Common myeloid progenitor, CD34-positive (primary cell): ENCODE measurements at regions of chr14 and their contacts with region 1.

Region 1: DNA sequence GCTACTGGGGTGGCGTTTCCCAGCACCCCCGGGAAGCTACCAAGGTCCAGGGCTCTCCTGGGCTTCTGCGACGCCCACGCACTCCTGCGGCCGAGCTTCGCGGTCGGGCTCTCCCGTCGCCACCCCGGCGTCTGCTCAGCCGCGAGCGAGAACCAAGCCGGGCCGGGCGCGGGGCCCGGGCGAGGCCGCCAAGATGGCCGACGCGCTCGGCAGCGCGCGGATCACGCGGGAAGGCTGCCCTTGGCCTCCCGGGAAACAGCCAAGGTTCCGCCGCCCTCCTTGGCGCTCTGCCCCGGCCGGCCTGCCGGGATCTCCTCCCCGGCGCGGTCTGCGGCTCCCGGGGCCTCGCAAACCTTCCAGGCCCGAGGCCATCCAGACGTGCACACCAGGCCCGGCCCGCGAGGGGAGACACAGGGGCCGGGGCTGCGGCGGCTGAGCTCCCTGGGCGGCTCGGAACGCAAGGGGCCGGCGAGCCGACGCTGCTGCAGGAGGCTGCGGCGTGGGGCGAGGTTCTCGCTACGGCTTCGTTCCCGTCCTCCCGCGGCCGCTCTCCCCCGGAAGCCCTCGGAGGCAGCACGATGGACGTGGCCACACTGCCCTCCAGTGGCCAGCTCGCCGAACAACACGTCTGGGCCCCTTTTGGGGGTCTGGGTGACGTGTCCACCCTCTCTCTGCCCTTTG is 23.5 kb upstream of the ZFP36L1 start:
- DNase-seq: peak; percentile 88 to 94 (median 93)
- H3K4me3 ChIP-seq: peak overlapping the region; percentile 32 to 71 (median 49)
- H3K27ac ChIP-seq: peak overlapping the region; percentile 59 to 82
- H3K4me1 ChIP-seq: peaks cover 9 to 66% (median 59%) of the 10 kb centered on the region in 4 experiments
- H3K27me3 ChIP-seq: no peaks in the 10 kb centered on the region

Region 2: DNA sequence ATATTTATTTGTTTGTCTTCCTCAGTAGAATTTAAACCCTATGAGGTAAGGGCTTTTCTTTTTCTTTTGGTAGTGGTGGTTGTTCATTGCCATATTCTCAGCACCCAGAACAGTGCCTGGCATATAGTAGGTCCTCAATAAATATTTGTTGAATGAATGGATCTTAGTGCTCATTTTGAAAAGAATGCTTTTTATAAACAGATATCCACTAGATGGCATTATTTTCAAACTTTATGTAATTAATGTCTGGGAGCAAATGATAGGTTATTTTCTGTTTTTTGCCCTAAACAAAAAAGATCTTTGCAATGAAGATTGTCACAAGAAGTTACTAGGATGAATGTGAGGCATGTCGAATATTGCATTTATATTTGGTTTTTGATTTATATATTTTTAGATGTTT is 932.7 kb before region 1 on chr14:
- CTCF ChIA-PET with region 1: interaction called, 22 read pairs
- POLR2A ChIA-PET with region 1: no interaction called
- DNase-seq: peak; percentile 29 to 47 (median 42)
- H3K4me3 ChIP-seq: no peak overlapping the region
- H3K27ac ChIP-seq: no peak overlapping the region
- H3K4me1 ChIP-seq: peaks cover 11 to 33% (median 19%) of the 10 kb centered on the region in 4 experiments
- H3K27me3 ChIP-seq: no peaks in the 10 kb centered on the region

Region 3: GRCh38 chr14:67934008-67934481 is 882.4 kb before region 1 on chr14:
- CTCF ChIA-PET with region 1: interaction called, 28 read pairs
- POLR2A ChIA-PET with region 1: no interaction called
- DNase-seq: peak; percentile 81 to 87 (median 86)
- H3K4me3 ChIP-seq: no peak overlapping the region
- H3K27ac ChIP-seq: no peak overlapping the region
- H3K4me1 ChIP-seq: peaks cover 0 to 12% (median 7%) of the 10 kb centered on the region in 4 experiments
- H3K27me3 ChIP-seq: no peaks in the 10 kb centered on the region

Region 4: GRCh38 chr14:67943947-67944346 is 872.5 kb before region 1 on chr14:
- CTCF ChIA-PET with region 1: interaction called, 45 read pairs
- POLR2A ChIA-PET with region 1: no interaction called
- DNase-seq: peak; percentile 90 to 94 (median 94)
- H3K4me3 ChIP-seq: no peak overlapping the region
- H3K27ac ChIP-seq: no peak overlapping the region
- H3K4me1 ChIP-seq: peaks cover 6 to 22% (median 7%) of the 10 kb centered on the region in 4 experiments
- H3K27me3 ChIP-seq: no peaks in the 10 kb centered on the region

Region 5: GRCh38 chr14:68795597-68796417 is 20.6 kb before region 1 on chr14:
- CTCF ChIA-PET with region 1: interaction called, 62 read pairs
- POLR2A ChIA-PET with region 1: interaction called, 26 read pairs
- DNase-seq: peak; percentile 82 to 96 (median 94)
- H3K4me3 ChIP-seq: peak overlapping the region; percentile 23 to 98 (median 66)
- H3K27ac ChIP-seq: peak overlapping the region; percentile 96 to 98
- H3K4me1 ChIP-seq: peaks cover 7 to 54% (median 48%) of the 10 kb centered on the region in 4 experiments
- H3K27me3 ChIP-seq: no peaks in the 10 kb centered on the region